ENCODE measurements at regions of chr2 and their contacts with region 1.

Region 1: GRCh38 chr2:169694113-169694903 is at the starts of genes CFAP210 and PHOSPHO2:
- DNase-seq: peak; percentile 96
- ATAC-seq: peak; percentile 99
- H3K4me3 ChIP-seq: peak within 1 kb of the TSS; percentile 78 to 88 (median 81)
- H3K27ac ChIP-seq: peak within 1 kb of the TSS; percentile 79
- H3K4me1 ChIP-seq: peaks cover 44% of the 10 kb centered on the region
- H3K27me3 ChIP-seq: no peaks in the 10 kb centered on the region; a peak in 1 of 5 replicates
- CTCF ChIP-seq: peak; percentile 46
- EP300 ChIP-seq: peak in 1 of 2 experiments; percentile 67; a peak in 1 of 4 replicates
- POLR2A ChIP-seq: peak; percentile 92 to 99
- RAD21 ChIP-seq: peak; percentile 69
- total RNA-seq, gene CFAP210: 0.14 and 0.18 TPM in 2 replicates
- total RNA-seq, gene PHOSPHO2: 11.4 and 14.6 TPM in 2 replicates

Region 2: GRCh38 chr2:169734169-169734847 is 40.0 kb after region 1 on chr2:
- CTCF ChIA-PET with region 1: interaction called, 3 read pairs
- POLR2A ChIA-PET with region 1: interaction called, 3 read pairs
- in situ Hi-C with region 1: no loop called
- intact Hi-C with region 1: loop called (anchors 2 kb)
- DNase-seq: no peak
- ATAC-seq: peak; percentile 27; the same call in 2 of the 3 replicates
- H3K4me3 ChIP-seq: peak overlapping the region; percentile 64 to 89 (median 87)
- H3K27ac ChIP-seq: peak overlapping the region; percentile 70
- H3K4me1 ChIP-seq: peaks cover 64% of the 10 kb centered on the region
- H3K27me3 ChIP-seq: no peaks in the 10 kb centered on the region; a peak in 1 of 5 replicates
- CTCF ChIP-seq: no peak
- EP300 ChIP-seq: no peak
- POLR2A ChIP-seq: no peak
- RAD21 ChIP-seq: no peak

Measured in HepG2 (cell line).